ENCODE measurements at regions of chr7 and their contacts with region 1.

Region 1: DNA sequence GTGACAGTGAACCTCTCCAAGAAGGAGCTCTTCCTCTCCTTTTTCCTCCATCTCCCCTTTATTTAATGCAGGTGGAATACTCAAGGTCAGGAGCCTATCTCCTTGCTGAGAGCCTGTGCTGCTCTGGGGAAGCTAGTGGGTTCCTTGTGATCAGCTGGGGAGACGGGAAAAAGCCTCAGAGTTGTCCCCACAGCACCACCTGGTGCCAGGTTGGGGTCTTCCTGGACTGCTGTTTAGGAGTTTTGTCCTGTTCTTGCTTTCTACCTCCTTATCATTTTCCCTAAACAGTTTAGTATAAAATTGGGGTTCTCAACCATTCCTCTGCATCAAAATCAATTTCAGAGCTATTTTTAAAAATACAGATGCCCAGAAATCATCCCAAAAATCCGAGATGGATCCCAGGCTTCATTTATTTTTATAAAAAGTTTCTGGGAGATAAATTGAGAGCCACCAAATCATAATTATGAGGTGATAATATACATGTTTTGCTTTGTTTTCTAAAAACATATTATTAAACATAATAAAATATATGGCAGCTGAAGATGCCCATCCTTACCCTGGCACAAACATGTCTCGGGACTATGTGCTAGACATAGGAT is 44.3 kb downstream of the MACC1 start:
- DNase-seq: no peak
- H3K4me3 ChIP-seq: no peak overlapping the region
- H3K27ac ChIP-seq: no peak overlapping the region
- H3K27me3 ChIP-seq: no peaks in the 10 kb centered on the region
- CTCF ChIP-seq: peak; percentile 58

Region 2: GRCh38 chr7:19754521-19755116 is 418.2 kb before region 1 on chr7:
- CTCF ChIA-PET with region 1: interaction called, 16 read pairs
- POLR2A ChIA-PET with region 1: no interaction called
- DNase-seq: no peak
- H3K4me3 ChIP-seq: no peak overlapping the region
- H3K27ac ChIP-seq: no peak overlapping the region
- H3K27me3 ChIP-seq: no peaks in the 10 kb centered on the region
- CTCF ChIP-seq: peak; percentile 74

Region 3: DNA sequence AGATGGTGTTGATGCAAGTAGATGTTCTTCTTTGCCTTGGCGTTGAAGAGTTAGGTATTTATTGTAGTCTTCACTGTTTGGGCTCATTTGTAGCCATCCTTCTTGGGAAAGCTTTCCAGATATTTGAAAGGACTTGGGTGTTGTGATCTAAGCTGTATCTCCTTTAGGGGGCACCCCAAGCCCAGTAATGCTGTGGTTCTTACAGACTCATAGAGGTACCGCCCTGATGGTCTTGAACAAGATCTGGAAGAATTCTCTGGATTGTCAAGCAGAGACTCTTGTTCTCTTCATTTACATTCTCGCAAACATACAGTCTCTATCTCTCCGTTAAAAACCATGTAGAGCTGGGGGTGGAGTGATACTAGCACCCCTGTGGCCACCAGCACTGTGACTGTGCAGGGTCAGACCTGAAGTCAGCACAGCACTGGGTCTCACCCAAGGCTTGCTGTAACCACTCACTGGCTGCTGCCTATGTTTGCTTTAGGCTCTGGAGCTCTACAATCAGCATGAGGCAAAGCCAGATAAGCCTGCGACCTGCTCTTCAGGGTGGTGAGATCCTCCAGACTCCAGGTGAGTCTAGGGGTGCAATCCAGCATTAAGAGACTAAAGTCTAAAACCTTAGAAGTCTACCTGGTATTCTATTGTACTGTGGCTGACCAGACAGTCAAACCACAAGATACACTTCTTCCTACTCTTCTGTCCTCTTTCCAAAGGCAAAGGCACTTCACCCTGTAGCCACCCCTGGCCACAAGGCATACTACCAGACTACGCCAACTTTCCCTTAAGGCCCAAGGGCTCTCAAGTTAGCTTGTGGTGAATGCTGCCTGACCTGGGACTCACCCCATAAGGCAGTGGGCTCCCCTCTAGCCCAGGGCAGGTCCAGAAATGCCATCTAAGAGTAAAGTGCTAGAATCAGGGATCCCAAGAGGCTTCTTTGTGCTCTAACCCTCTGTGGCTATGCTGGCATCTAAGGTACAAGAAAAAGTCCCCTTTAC is 189.7 kb before region 1 on chr7:
- CTCF ChIA-PET with region 1: interaction called, 24 read pairs
- POLR2A ChIA-PET with region 1: no interaction called
- DNase-seq: peak; percentile 48
- H3K4me3 ChIP-seq: no peak overlapping the region
- H3K27ac ChIP-seq: no peak overlapping the region
- H3K27me3 ChIP-seq: no peaks in the 10 kb centered on the region
- CTCF ChIP-seq: peak; percentile 63

Region 4: GRCh38 chr7:20064974-20065862 is 107.6 kb before region 1 on chr7:
- CTCF ChIA-PET with region 1: no interaction called
- POLR2A ChIA-PET with region 1: no interaction called
- DNase-seq: peak; percentile 8
- H3K4me3 ChIP-seq: no peak overlapping the region
- H3K27ac ChIP-seq: no peak overlapping the region
- H3K27me3 ChIP-seq: no peaks in the 10 kb centered on the region
- CTCF ChIP-seq: no peak

Region 5: DNA sequence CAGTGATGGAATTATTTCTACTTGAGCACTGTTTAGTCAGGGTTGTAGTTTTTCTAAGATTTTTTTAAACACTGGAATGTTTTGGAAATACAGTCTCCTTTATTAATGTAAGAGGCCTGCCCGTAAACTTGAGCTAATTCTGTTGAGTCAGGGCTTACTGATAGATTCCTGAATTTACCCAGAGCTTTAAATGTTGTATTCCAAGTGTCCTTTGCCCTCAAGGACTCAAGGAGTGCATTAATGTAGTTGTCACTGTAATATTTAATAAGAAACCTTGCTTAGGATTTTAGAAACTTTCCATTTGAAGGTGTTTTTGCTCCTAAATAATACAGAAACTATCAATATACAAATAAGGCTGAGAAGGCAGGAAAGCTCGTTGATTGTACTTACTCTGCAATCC is 44.8 kb before region 1 on chr7:
- CTCF ChIA-PET with region 1: no interaction called
- POLR2A ChIA-PET with region 1: no interaction called
- DNase-seq: no peak
- H3K4me3 ChIP-seq: no peak overlapping the region
- H3K27ac ChIP-seq: no peak overlapping the region
- H3K27me3 ChIP-seq: peaks cover 2% of the 10 kb centered on the region
- CTCF ChIP-seq: no peak

Region 6: DNA sequence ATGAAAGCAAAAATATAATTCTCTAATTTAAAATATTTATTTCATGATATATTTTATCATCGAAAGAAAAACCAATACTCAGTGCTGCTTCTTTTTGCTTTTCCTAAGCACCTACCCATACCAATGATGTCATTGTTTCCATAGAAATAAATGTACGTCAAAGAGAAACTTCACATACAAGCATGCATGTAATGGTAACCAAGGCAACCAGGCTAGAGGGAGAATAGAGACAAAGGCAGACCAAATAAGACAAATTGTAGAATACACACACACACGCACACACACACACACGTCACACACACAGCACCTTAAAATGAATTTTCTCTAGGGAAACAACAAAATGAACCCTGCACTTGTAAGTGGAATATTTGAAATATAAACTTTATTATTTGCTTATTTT is 31.2 kb before region 1 on chr7:
- CTCF ChIA-PET with region 1: no interaction called
- POLR2A ChIA-PET with region 1: no interaction called
- DNase-seq: no peak
- H3K4me3 ChIP-seq: no peak overlapping the region
- H3K27ac ChIP-seq: no peak overlapping the region
- H3K27me3 ChIP-seq: no peaks in the 10 kb centered on the region
- CTCF ChIP-seq: no peak

Region 7: GRCh38 chr7:20407585-20408461 is 235.0 kb after region 1 on chr7:
- CTCF ChIA-PET with region 1: no interaction called
- POLR2A ChIA-PET with region 1: no interaction called
- DNase-seq: no peak
- H3K4me3 ChIP-seq: no peak overlapping the region
- H3K27ac ChIP-seq: no peak overlapping the region
- H3K27me3 ChIP-seq: no peaks in the 10 kb centered on the region
- CTCF ChIP-seq: no peak